Posterior vena cava (tissue), 2 donors: ENCODE measurements at regions of chr12 and their contacts with region 1.

Region 1: GRCh38 chr12:116525418-116526001 is 33.7 kb upstream of the MAP1LC3B2 start:
- DNase-seq: peak; percentile 90

Region 2: GRCh38 chr12:116434155-116435011 is 91.1 kb before region 1 on chr12:
- intact Hi-C with region 1: loop called in 1 of 2 experiments (anchors 10 kb)
- DNase-seq: peak; percentile 93

Region 3: GRCh38 chr12:116456330-116457082 is 69.0 kb before region 1 on chr12:
- intact Hi-C with region 1: no loop called
- DNase-seq: peak; percentile 86